Activated CD4-positive, alpha-beta memory T cell treated with anti-CD3 and anti-CD28 coated beads for 36 hours (primary cell): ENCODE measurements at regions of chr7 and their contacts with region 1.

Region 1: DNA sequence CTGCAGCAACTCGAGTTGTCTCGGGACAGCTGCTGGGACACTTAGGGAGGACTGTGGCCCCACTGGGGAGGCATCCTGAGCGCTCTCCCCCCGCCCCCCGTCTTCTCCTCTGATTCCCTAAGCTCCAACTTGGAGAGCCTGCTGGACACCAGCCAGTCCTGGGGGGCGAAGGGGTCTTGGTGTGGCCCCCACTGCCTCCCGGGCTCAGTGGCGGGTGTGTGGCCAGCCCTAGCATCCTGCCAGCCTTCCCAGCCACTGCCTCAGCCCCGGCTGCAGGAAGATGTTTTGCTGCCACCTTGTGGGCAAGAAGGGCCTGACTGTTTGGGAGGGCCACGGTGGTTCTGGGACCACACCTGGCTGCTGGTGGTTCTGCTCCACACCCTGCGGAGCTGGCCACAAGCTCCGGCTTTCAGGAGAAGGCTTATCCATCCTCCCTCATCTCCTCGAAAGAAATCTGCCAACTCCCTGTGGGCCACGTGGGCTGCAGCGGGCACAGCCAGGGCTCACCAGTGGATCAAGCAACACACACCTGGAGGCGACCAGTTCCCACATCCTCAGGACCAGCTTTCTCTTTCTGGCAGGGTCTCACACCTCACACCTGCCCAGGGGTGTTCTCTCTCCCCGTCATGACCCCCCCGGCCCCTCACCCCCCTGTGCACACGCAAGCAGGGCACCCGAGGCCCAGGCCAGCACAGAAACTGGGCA is 24.8 kb downstream of the AGAP3 start:
- DNase-seq: peak; percentile 83
- H3K4me3 Mint-ChIP-seq: no peak overlapping the region
- H3K27ac Mint-ChIP-seq: no peak overlapping the region
- H3K4me1 Mint-ChIP-seq: peaks cover 4% of the 10 kb centered on the region
- H3K27me3 Mint-ChIP-seq: peaks cover 5% of the 10 kb centered on the region

Region 2: DNA sequence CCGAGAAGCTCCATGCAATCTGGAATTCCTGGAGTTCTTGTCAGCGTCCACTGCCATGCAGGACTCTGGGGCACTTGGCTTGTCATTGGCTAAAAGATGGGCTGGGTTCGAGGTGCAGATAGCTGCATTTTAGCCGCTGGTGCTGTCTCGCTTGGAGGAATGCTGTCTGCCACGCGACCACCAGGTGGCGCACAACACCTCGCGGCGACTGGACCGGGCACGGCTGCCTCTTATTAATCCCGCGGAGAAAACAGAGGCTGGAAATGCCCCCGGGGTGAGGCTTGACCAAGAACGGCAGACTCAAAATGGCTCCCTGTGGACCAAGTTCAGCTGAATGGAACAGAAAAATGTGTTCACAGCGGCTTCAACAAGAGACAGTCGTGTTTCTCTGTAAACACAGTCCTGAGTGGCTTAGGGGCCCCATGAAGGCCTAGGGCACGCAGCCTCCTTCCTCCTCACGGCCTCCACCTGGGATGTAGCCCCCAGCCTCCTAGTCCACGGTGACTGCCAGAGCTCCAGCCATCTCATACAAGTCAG is 212.6 kb before region 1 on chr7:
- CTCF ChIA-PET with region 1: interaction called, 15 read pairs
- POLR2A ChIA-PET with region 1: no interaction called
- intact Hi-C with region 1: loop called (anchors 5 kb)
- DNase-seq: peak; percentile 85
- H3K4me3 Mint-ChIP-seq: peak overlapping the region; percentile 25
- H3K27ac Mint-ChIP-seq: no peak overlapping the region
- H3K4me1 Mint-ChIP-seq: peaks cover 11% of the 10 kb centered on the region
- H3K27me3 Mint-ChIP-seq: peaks cover 42% of the 10 kb centered on the region

Region 3: DNA sequence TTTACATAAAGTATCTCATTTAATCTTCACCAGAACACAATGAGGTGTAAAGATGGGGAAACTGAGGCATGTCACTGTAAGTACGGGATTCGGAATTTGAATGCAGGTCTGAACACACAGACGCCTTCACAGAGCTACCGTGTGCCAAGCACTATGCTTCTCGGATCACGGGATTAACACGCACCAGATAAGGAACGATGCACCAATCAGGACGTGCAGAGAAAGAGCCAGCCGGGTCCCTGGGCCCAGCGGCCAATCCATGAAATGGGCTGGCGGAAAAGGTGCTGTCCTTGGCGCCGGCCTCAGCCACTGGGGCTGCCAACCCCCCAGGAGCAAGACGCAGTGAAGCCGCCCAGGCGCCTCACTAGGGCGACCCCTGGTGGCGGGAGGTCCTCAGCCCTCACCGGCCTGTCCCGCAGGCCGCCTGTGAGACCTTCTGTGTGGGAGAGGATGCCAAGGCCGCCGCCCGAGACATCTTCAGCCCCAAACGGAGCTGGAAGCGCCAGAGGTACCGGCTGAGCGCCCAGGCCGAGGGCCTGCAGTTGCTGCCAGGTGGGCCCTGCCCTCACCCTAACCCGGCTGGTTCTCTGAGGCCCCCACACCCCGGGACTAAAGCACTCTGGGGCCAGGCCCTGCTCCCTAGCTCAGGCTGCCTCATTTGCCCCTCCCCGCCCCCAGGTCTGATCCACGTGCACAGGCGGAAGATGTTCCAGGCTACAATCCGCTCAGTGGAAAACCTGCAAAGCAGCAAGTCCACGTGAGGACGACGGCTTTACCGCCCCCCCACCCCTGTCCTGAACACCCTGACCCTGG is 102.4 kb before region 1 on chr7:
- CTCF ChIA-PET with region 1: interaction called, 17 read pairs
- POLR2A ChIA-PET with region 1: no interaction called
- intact Hi-C with region 1: no loop called
- DNase-seq: peak; percentile 82
- H3K4me3 Mint-ChIP-seq: peak overlapping the region; percentile 71
- H3K27ac Mint-ChIP-seq: peak overlapping the region; percentile 82
- H3K4me1 Mint-ChIP-seq: peaks cover 57% of the 10 kb centered on the region
- H3K27me3 Mint-ChIP-seq: no peaks in the 10 kb centered on the region

Region 4: GRCh38 chr7:151028131-151028947 is 82.8 kb before region 1 on chr7 and contains the start of gene ABCB8:
- CTCF ChIA-PET with region 1: interaction called, 26 read pairs
- POLR2A ChIA-PET with region 1: no interaction called
- intact Hi-C with region 1: loop called (anchors 2 kb)
- DNase-seq: peak; percentile 99
- H3K4me3 Mint-ChIP-seq: peak within 1 kb of the TSS; percentile 94
- H3K27ac Mint-ChIP-seq: peak within 1 kb of the TSS; percentile 90
- H3K4me1 Mint-ChIP-seq: peaks cover 18% of the 10 kb centered on the region
- H3K27me3 Mint-ChIP-seq: no peaks in the 10 kb centered on the region
- total RNA-seq, gene ABCB8: 48.4 to 49.5 TPM

Region 5: GRCh38 chr7:151085691-151086620 is 25.1 kb before region 1 on chr7 and contains the start of gene AGAP3:
- CTCF ChIA-PET with region 1: interaction called, 15 read pairs
- POLR2A ChIA-PET with region 1: no interaction called
- intact Hi-C with region 1: loop called (anchors 1 kb)
- DNase-seq: peak; percentile 59
- H3K4me3 Mint-ChIP-seq: peak within 1 kb of the TSS; percentile 82
- H3K27ac Mint-ChIP-seq: peak within 1 kb of the TSS; percentile 60
- H3K4me1 Mint-ChIP-seq: peaks cover 38% of the 10 kb centered on the region
- H3K27me3 Mint-ChIP-seq: peaks cover 5% of the 10 kb centered on the region
- total RNA-seq, gene AGAP3: 29.8 to 36.5 TPM

Region 6: GRCh38 chr7:151123822-151124464 is 12.8 kb after region 1 on chr7:
- CTCF ChIA-PET with region 1: interaction called, 44 read pairs
- POLR2A ChIA-PET with region 1: no interaction called
- intact Hi-C with region 1: no loop called
- DNase-seq: peak; percentile 85
- H3K4me3 Mint-ChIP-seq: no peak overlapping the region
- H3K27ac Mint-ChIP-seq: no peak overlapping the region
- H3K4me1 Mint-ChIP-seq: no peaks in the 10 kb centered on the region
- H3K27me3 Mint-ChIP-seq: no peaks in the 10 kb centered on the region

Region 7: GRCh38 chr7:151519765-151520418 is 408.8 kb after region 1 on chr7 and contains the start of gene RHEB:
- CTCF ChIA-PET with region 1: no interaction called
- POLR2A ChIA-PET with region 1: no interaction called
- intact Hi-C with region 1: no loop called
- DNase-seq: peak; percentile 99
- H3K4me3 Mint-ChIP-seq: peak within 1 kb of the TSS; percentile 92
- H3K27ac Mint-ChIP-seq: peak within 1 kb of the TSS; percentile 96
- H3K4me1 Mint-ChIP-seq: peaks cover 35% of the 10 kb centered on the region
- H3K27me3 Mint-ChIP-seq: no peaks in the 10 kb centered on the region
- total RNA-seq, gene RHEB: 62.0 to 64.6 TPM